Caco-2 (cell line): ENCODE measurements at regions of chr1 and their contacts with region 1.

Region 1: GRCh38 chr1:241847796-241848685 is at the start of gene EXO1:
- DNase-seq: peak; percentile 86 to 87
- H3K4me3 ChIP-seq: peak within 1 kb of the TSS; percentile 99
- H3K4me3 Mint-ChIP-seq: peak within 1 kb of the TSS; percentile 98
- H3K27ac Mint-ChIP-seq: peak within 1 kb of the TSS; percentile 97
- H3K4me1 ChIP-seq: no peaks in the 10 kb centered on the region; the same call in 1 of the 2 replicates
- H3K4me1 Mint-ChIP-seq: peaks cover 6% of the 10 kb centered on the region
- H3K27me3 ChIP-seq: no peaks in the 10 kb centered on the region
- H3K27me3 Mint-ChIP-seq: peaks cover 5% of the 10 kb centered on the region
- CTCF ChIP-seq: peak in 1 of 2 experiments; percentile 38
- total RNA-seq, gene EXO1: 18.5 and 19.6 TPM in 2 replicates

Region 2: DNA sequence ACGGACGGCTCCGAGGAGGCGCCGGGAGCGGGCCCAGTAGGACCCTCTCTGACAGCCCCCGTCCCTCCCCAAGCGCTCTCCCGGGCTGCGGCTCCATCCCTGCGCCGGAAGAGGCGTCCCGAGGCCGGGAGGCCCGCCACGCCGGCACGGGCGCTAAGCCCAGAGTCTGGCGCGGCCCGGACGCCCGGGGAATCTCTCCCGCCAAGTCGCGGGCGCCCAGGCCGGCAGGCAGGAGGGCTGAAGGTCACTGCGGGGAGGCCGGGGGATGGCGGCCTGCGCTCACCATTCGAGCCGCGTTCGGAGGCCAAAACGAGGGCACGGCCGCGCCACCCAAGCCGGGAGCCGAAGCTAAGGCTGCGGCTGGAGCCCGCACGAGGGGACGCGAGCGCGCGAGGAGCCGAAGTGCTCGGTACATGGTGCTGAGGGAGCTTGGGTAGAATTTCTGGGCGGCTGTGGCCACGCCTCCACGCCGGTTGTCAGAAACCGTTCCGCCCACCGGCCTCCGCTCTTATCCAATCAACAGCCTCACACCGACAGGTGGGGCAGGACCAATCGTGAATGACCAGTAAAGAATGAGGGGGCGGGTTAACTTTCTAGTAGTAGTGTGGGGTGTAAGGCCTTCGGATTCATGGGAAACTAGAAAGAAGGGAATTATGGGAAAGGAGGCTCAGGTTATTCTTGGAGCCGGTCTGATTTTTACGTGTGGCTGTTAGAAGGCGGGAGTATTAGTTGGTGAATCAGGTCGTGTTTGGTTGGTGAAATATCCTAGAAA is 328.5 kb before region 1 on chr1 and contains the start of gene FH:
- CTCF ChIA-PET with region 1: no interaction called
- POLR2A ChIA-PET with region 1: no interaction called
- intact Hi-C with region 1: loop called (anchors 5 kb)
- DNase-seq: peak; percentile 95 to 97
- H3K4me3 ChIP-seq: peak within 1 kb of the TSS; percentile 53
- H3K4me3 Mint-ChIP-seq: no peak within 1 kb of the TSS
- H3K27ac Mint-ChIP-seq: peak within 1 kb of the TSS; percentile 43
- H3K4me1 ChIP-seq: peaks cover 4% of the 10 kb centered on the region; the same call in 1 of the 2 replicates
- H3K4me1 Mint-ChIP-seq: peaks cover 6% of the 10 kb centered on the region
- H3K27me3 ChIP-seq: no peaks in the 10 kb centered on the region
- H3K27me3 Mint-ChIP-seq: peaks cover 18% of the 10 kb centered on the region
- CTCF ChIP-seq: no peak
- total RNA-seq, gene FH: 105 and 108 TPM in 2 replicates

Region 3: DNA sequence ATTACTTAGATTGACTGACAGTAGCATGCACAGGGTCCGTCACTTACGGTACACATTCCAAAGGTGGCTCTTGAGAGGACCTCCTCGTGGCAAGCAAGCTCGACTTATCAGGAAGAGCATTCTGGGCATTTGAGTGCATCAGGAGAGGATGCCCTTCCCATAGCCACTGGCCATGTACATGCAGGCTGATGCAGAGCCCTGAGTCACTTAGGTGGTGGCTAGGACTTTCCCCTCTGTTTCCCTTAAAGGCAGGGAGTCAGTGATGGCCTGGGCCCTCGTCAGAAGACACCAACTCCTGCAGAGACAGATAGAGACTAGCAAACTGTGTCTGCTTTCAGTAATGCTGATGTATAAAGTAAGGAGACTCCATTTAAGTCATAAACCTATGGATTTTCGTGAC is 12.9 kb after region 1 on chr1:
- CTCF ChIA-PET with region 1: no interaction called
- POLR2A ChIA-PET with region 1: no interaction called
- intact Hi-C with region 1: loop called (anchors 1 kb)
- DNase-seq: no peak
- H3K4me3 ChIP-seq: no peak overlapping the region
- H3K4me3 Mint-ChIP-seq: no peak overlapping the region
- H3K27ac Mint-ChIP-seq: no peak overlapping the region
- H3K4me1 ChIP-seq: no peaks in the 10 kb centered on the region
- H3K4me1 Mint-ChIP-seq: no peaks in the 10 kb centered on the region
- H3K27me3 ChIP-seq: no peaks in the 10 kb centered on the region
- H3K27me3 Mint-ChIP-seq: no peaks in the 10 kb centered on the region
- CTCF ChIP-seq: no peak